CD8-positive, alpha-beta T cell (primary cell): ENCODE measurements at regions of chr12 and their contacts with region 1.

Region 1: DNA sequence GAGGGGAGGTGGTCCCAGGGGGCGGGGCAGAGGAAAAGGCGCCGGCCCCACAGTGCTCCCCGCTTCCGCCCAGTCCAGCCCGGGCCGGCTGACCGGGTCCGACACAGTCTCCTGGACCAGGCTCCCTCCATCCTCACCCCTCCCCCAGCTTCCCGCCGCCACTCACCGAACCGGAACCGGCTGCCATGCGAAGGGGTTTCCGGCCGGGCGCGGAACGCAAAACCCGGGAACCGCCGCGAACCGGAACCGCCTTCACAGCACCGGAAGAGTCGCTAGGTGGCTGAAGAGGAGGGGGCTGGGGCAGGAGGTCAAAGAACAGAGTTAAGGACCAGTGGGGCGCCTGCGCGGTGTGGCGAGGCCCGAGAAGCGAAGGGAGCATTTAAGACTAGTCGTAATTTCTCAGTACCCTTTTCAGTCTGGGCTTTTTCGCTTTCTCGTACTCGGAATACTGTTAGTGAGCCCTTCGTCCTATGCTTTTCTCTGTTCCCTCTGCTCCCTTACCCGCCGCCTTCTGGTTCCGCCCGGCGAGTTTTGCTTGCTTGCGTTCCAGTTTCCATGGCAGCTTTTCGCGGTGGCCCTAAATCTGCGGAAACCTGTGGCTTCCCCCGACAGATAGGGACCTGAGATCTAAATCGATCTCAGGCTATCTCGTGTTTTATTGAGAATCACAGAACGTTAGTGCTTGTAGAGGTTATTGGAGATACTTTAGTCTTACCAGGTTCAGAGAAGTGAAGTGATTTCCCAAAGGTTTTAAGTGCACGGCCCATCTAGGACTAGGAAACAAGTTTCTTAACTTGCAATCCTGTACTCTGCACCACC is at the start of gene SENP1:
- DNase-seq: peak; percentile 82 to 95 (median 89)
- ATAC-seq: peak; percentile 78
- H3K4me3 ChIP-seq: peak within 1 kb of the TSS; percentile 81 to 89
- H3K4me3 Mint-ChIP-seq: peak within 1 kb of the TSS; percentile 88
- H3K27ac ChIP-seq: peak within 1 kb of the TSS; percentile 84 to 95
- H3K27ac Mint-ChIP-seq: peak within 1 kb of the TSS; percentile 94
- H3K4me1 ChIP-seq: peaks cover 21% of the 10 kb centered on the region
- H3K4me1 Mint-ChIP-seq: peaks cover 54% of the 10 kb centered on the region
- H3K27me3 ChIP-seq: no peaks in the 10 kb centered on the region
- H3K27me3 Mint-ChIP-seq: no peaks in the 10 kb centered on the region
- CTCF ChIP-seq: no peak
- total RNA-seq, gene SENP1: 24.4 to 24.6 TPM

Region 2: GRCh38 chr12:47442310-47442709 is 663.8 kb before region 1 on chr12:
- CTCF ChIA-PET with region 1: no interaction called
- POLR2A ChIA-PET with region 1: no interaction called
- intact Hi-C with region 1: no loop called
- DNase-seq: no peak
- ATAC-seq: no peak
- H3K4me3 ChIP-seq: no peak overlapping the region
- H3K4me3 Mint-ChIP-seq: no peak overlapping the region
- H3K27ac ChIP-seq: no peak overlapping the region
- H3K27ac Mint-ChIP-seq: no peak overlapping the region
- H3K4me1 ChIP-seq: no peaks in the 10 kb centered on the region
- H3K4me1 Mint-ChIP-seq: no peaks in the 10 kb centered on the region
- H3K27me3 ChIP-seq: no peaks in the 10 kb centered on the region
- H3K27me3 Mint-ChIP-seq: no peaks in the 10 kb centered on the region
- CTCF ChIP-seq: no peak

Region 3: DNA sequence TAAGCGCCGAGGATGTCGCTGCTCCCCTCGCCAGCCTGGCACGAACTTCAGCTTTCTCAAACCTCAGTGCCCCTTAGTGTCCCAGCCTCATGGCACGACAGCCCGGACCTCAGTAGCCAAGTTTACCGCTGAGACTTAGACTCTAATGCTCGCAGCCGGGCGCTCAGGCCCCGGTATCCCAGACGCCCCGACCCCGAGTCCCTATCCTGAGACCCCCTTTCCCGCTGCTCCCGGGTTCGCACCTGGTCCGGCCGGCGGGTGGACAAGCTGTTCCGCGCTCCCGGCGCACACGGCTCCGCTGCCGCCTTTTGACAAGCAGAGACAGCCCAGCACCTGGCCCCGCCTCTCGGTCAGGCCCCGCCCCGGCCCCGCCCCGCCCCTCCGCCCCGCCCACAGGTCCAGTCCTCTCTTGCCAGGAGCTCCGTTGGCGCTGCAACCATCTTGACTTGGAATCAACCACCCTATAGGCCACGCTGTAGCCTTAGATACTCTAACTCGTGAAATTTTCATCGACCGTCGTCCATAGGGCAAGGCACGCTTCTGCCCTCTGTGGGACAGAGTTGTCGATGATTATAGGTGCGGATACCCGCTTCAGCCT is 201.3 kb before region 1 on chr12 and contains the start of gene VDR:
- CTCF ChIA-PET with region 1: no interaction called
- POLR2A ChIA-PET with region 1: no interaction called
- intact Hi-C with region 1: loop called in 1 of 2 experiments (anchors 5 kb)
- DNase-seq: peak; percentile 39 to 78 (median 61)
- ATAC-seq: peak; percentile 75
- H3K4me3 ChIP-seq: peak within 1 kb of the TSS; percentile 68 to 70
- H3K4me3 Mint-ChIP-seq: peak within 1 kb of the TSS; percentile 86
- H3K27ac ChIP-seq: no peak within 1 kb of the TSS
- H3K27ac Mint-ChIP-seq: peak within 1 kb of the TSS; percentile 56
- H3K4me1 ChIP-seq: peaks cover 43% of the 10 kb centered on the region
- H3K4me1 Mint-ChIP-seq: peaks cover 43% of the 10 kb centered on the region
- H3K27me3 ChIP-seq: peaks cover 0 to 4% of the 10 kb centered on the region in 2 experiments
- H3K27me3 Mint-ChIP-seq: peaks cover 2% of the 10 kb centered on the region
- CTCF ChIP-seq: no peak
- total RNA-seq, gene VDR: 0.90 to 0.92 TPM

Region 4: GRCh38 chr12:48157018-48157888 is 51.2 kb after region 1 on chr12 and contains the start of gene ASB8:
- CTCF ChIA-PET with region 1: interaction called, 5 read pairs
- POLR2A ChIA-PET with region 1: interaction called, 29 read pairs
- intact Hi-C with region 1: loop called (anchors 1 kb)
- DNase-seq: peak; percentile 98 to 99 (median 99)
- ATAC-seq: peak; percentile 95
- H3K4me3 ChIP-seq: peak within 1 kb of the TSS; percentile 92 to 97
- H3K4me3 Mint-ChIP-seq: peak within 1 kb of the TSS; percentile 98
- H3K27ac ChIP-seq: peak within 1 kb of the TSS; percentile 83 to 87
- H3K27ac Mint-ChIP-seq: peak within 1 kb of the TSS; percentile 99
- H3K4me1 ChIP-seq: peaks cover 15% of the 10 kb centered on the region
- H3K4me1 Mint-ChIP-seq: peaks cover 48% of the 10 kb centered on the region
- H3K27me3 ChIP-seq: no peaks in the 10 kb centered on the region
- H3K27me3 Mint-ChIP-seq: no peaks in the 10 kb centered on the region
- CTCF ChIP-seq: peak; percentile 63
- total RNA-seq, gene ASB8: 54.7 to 55.6 TPM

Region 5: DNA sequence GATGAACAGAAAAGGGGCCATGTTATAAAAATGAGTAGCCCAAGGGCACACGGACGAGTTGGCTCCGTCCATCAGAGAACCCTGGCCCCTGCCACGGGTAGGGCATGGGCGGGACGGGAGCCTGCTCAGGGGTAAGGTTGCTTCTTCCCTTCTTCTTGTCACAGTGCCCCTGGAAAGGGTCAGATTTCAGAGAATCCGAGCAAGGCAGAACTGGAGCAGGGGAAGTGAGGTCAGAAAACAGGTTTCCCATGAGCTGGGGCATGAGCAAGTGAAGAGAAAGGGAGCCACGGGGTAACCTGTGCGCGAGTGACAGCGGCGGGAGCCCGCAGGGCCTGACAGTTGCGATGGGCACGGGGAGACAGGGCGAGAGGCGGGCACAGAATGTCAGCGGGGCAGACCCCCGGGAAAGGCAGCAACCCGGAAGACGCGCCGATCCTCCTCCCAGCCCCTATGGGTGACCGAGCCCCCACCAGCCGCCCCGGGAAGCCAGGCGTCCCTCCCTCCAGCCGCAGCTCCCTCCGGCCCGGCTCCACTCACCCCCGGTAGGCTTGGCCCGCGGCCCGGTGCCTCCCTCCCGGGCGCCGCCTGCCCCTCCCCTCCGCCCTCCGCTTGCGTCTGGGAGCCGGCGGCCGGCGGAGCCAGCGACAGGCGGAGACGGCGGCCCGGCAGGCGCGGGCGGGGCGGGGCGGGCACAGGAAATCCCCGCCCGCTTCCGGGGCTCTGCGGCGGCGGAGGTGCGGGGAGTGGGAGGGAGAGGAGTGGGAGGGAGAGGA is 244.4 kb after region 1 on chr12 and contains the start of gene ZNF641:
- CTCF ChIA-PET with region 1: no interaction called
- POLR2A ChIA-PET with region 1: no interaction called
- intact Hi-C with region 1: loop called in 1 of 2 experiments (anchors 2 kb)
- DNase-seq: peak; percentile 54 to 93 (median 81)
- ATAC-seq: peak; percentile 87
- H3K4me3 ChIP-seq: peak within 1 kb of the TSS; percentile 86 to 88
- H3K4me3 Mint-ChIP-seq: peak within 1 kb of the TSS; percentile 92
- H3K27ac ChIP-seq: peak within 1 kb of the TSS; percentile 71 to 88
- H3K27ac Mint-ChIP-seq: peak within 1 kb of the TSS; percentile 95
- H3K4me1 ChIP-seq: peaks cover 26% of the 10 kb centered on the region
- H3K4me1 Mint-ChIP-seq: peaks cover 44% of the 10 kb centered on the region
- H3K27me3 ChIP-seq: no peaks in the 10 kb centered on the region
- H3K27me3 Mint-ChIP-seq: no peaks in the 10 kb centered on the region
- CTCF ChIP-seq: no peak
- total RNA-seq, gene ZNF641: 12.1 to 12.3 TPM